ENCODE measurements at regions of chr21 and their contacts with region 1.

Region 1: GRCh38 chr21:26850108-26850643 is 5.0 kb upstream of the ADAMTS1 start:
- DNase-seq: no peak
- ATAC-seq: no peak
- H3K4me3 ChIP-seq: peak overlapping the region in 6 of 12 donors; percentile 3 to 40 (median 8)
- H3K27ac ChIP-seq: no peak overlapping the region
- H3K4me1 ChIP-seq: peaks cover 0 to 19% (median 5%) of the 10 kb centered on the region in 12 donors
- H3K27me3 ChIP-seq: peaks cover 0 to 14% (median 0%) of the 10 kb centered on the region in 9 donors
- CTCF ChIP-seq: peak; percentile 44 to 86 (median 72)
- POLR2A ChIP-seq: no peak

Region 2: GRCh38 chr21:28063241-28064216 is 1213.4 kb after region 1 on chr21:
- intact Hi-C with region 1: loop called in 4 of 10 experiments (anchors 10 kb)
- DNase-seq: no peak
- ATAC-seq: no peak
- H3K4me3 ChIP-seq: no peak overlapping the region
- H3K27ac ChIP-seq: no peak overlapping the region
- H3K4me1 ChIP-seq: peaks cover 0 to 28% (median 8%) of the 10 kb centered on the region in 12 donors
- H3K27me3 ChIP-seq: no peaks in the 10 kb centered on the region
- CTCF ChIP-seq: no peak
- POLR2A ChIP-seq: no peak